ENCODE measurements at regions of chr19 and their contacts with region 1.

Region 1: DNA sequence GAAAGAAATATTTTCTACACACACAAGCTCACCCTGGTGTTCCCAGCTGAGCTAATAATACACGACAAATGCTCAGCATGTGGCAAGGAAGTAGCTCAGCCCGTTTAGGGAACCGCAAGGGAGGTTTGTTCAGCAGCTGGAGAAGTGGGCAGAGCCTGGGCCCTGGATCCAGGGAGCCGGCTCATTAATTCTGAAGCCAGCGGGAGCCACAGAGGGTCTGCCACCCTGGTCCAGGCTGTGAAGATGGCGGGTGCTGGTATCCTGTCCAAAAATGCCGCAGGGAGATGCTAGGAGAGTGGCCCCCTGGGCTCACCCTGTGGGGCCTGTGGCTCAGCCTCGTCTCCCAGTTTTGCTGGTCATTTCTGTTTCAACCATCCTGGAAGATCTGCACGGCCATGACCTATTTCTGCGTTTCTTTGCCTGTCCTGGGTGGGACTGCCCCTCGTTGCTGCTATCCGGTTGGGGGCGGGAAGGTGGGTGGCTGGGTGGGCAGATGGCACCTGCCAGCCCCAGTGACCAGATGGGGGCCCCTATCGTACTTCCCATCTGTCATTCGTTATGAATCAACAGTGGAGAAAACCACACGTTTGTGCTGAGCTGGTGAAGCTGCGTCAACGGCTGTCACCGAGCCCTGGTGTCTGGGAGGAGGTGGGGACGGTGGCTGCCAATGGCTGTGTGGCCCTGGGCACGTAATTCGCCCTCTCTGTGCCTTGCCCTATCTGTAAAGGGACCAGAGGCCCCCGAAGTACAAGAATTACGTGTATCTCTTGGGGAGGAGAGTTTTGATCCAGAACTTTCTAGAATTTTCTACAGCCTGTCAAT is 2.7 kb upstream of the GNA15 start:
- DNase-seq: peak; percentile 96
- H3K4me3 Mint-ChIP-seq: peak overlapping the region; percentile 10
- H3K27ac Mint-ChIP-seq: peak overlapping the region; percentile 88
- H3K4me1 Mint-ChIP-seq: peaks cover 30% of the 10 kb centered on the region
- H3K27me3 Mint-ChIP-seq: peaks cover 7% of the 10 kb centered on the region

Region 2: GRCh38 chr19:2977001-2977685 is 156.0 kb before region 1 on chr19 and contains the start of gene TLE6:
- CTCF ChIA-PET with region 1: interaction called, 3 read pairs
- intact Hi-C with region 1: loop called (anchors 1 kb)
- DNase-seq: peak; percentile 96
- H3K4me3 Mint-ChIP-seq: peak within 1 kb of the TSS; percentile 92
- H3K27ac Mint-ChIP-seq: peak within 1 kb of the TSS; percentile 18
- H3K4me1 Mint-ChIP-seq: peaks cover 15% of the 10 kb centered on the region
- H3K27me3 Mint-ChIP-seq: peaks cover 8% of the 10 kb centered on the region
- total RNA-seq, gene TLE6: 0.52 to 1.6 TPM

Region 3: GRCh38 chr19:3146677-3147100 is 13.5 kb after region 1 on chr19:
- CTCF ChIA-PET with region 1: interaction called, 15 read pairs
- intact Hi-C with region 1: loop called (anchors 1 kb)
- DNase-seq: peak; percentile 83
- H3K4me3 Mint-ChIP-seq: no peak overlapping the region
- H3K27ac Mint-ChIP-seq: no peak overlapping the region
- H3K4me1 Mint-ChIP-seq: peaks cover 18% of the 10 kb centered on the region
- H3K27me3 Mint-ChIP-seq: no peaks in the 10 kb centered on the region

Region 4: GRCh38 chr19:3163230-3163886 is 30.2 kb after region 1 on chr19:
- CTCF ChIA-PET with region 1: interaction called, 56 read pairs
- intact Hi-C with region 1: loop called (anchors 1 kb)
- DNase-seq: peak; percentile 82
- H3K4me3 Mint-ChIP-seq: no peak overlapping the region
- H3K27ac Mint-ChIP-seq: peak overlapping the region; percentile 59
- H3K4me1 Mint-ChIP-seq: peaks cover 26% of the 10 kb centered on the region
- H3K27me3 Mint-ChIP-seq: no peaks in the 10 kb centered on the region

Region 5: GRCh38 chr19:4182084-4182810 is 1049.1 kb after region 1 on chr19 and contains the starts of genes ANKRD24 and SIRT6:
- CTCF ChIA-PET with region 1: no interaction called
- intact Hi-C with region 1: loop called (anchors 2 kb)
- DNase-seq: peak; percentile 97
- H3K4me3 Mint-ChIP-seq: peak within 1 kb of the TSS; percentile 97
- H3K27ac Mint-ChIP-seq: peak within 1 kb of the TSS; percentile 93
- H3K4me1 Mint-ChIP-seq: peaks cover 34% of the 10 kb centered on the region
- H3K27me3 Mint-ChIP-seq: no peaks in the 10 kb centered on the region
- total RNA-seq, gene ANKRD24: 2.5 to 2.6 TPM
- total RNA-seq, gene SIRT6: 20.0 to 20.1 TPM

Measured in activated naive CD4-positive, alpha-beta T cell treated with anti-CD3 and anti-CD28 coated beads for 36 hours (primary cell).